SK-N-SH (cell line): ENCODE measurements at regions of chr19 and their contacts with region 1.

Region 1: GRCh38 chr19:5803752-5804515 is 933 bp upstream of the NRTN start:
- DNase-seq: peak; percentile 99
- H3K4me3 ChIP-seq: peak overlapping the region; percentile 30 to 56; a peak in 3 of 4 replicates
- H3K27ac ChIP-seq: no peak overlapping the region
- H3K4me1 ChIP-seq: peaks cover 3 to 32% of the 10 kb centered on the region in 2 experiments; a peak in 1 of 4 replicates
- H3K27me3 ChIP-seq: peaks cover 6% of the 10 kb centered on the region; the same call in 1 of the 2 replicates
- CTCF ChIP-seq: peak; percentile 96
- EP300 ChIP-seq: peak in 1 of 2 experiments; percentile 5; a peak in 1 of 4 replicates
- RAD21 ChIP-seq: peak; percentile 81

Region 2: GRCh38 chr19:5524081-5524480 is 279.9 kb before region 1 on chr19:
- CTCF ChIA-PET with region 1: no interaction called
- POLR2A ChIA-PET with region 1: no interaction called
- DNase-seq: no peak
- H3K4me3 ChIP-seq: no peak overlapping the region
- H3K27ac ChIP-seq: no peak overlapping the region
- H3K4me1 ChIP-seq: no peaks in the 10 kb centered on the region
- H3K27me3 ChIP-seq: no peaks in the 10 kb centered on the region; the same call in 1 of the 2 replicates
- CTCF ChIP-seq: no peak
- EP300 ChIP-seq: no peak
- RAD21 ChIP-seq: no peak

Region 3: DNA sequence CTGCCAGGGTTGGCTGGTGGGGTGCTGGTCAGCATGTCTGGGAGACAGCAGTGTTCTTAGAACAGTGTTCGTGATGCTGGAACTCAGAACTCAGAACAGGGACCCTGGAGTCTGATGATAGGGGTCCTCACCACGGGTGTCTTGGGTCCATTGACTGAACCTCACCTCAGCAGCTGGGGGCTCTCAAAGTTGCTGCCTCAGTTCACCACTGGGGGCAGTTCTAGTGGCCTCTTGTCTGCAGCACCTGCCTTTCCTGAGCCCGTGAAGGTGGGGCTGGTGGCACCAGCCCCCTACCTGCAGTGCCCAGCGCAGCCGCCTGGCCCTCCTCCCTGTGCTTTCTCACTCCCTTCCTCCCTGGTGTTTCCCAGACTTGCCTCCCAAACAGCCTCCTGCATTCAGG is 152.6 kb before region 1 on chr19:
- CTCF ChIA-PET with region 1: no interaction called
- POLR2A ChIA-PET with region 1: no interaction called
- DNase-seq: no peak
- H3K4me3 ChIP-seq: no peak overlapping the region
- H3K27ac ChIP-seq: no peak overlapping the region
- H3K4me1 ChIP-seq: no peaks in the 10 kb centered on the region
- H3K27me3 ChIP-seq: no peaks in the 10 kb centered on the region
- CTCF ChIP-seq: no peak
- EP300 ChIP-seq: no peak
- RAD21 ChIP-seq: no peak

Region 4: DNA sequence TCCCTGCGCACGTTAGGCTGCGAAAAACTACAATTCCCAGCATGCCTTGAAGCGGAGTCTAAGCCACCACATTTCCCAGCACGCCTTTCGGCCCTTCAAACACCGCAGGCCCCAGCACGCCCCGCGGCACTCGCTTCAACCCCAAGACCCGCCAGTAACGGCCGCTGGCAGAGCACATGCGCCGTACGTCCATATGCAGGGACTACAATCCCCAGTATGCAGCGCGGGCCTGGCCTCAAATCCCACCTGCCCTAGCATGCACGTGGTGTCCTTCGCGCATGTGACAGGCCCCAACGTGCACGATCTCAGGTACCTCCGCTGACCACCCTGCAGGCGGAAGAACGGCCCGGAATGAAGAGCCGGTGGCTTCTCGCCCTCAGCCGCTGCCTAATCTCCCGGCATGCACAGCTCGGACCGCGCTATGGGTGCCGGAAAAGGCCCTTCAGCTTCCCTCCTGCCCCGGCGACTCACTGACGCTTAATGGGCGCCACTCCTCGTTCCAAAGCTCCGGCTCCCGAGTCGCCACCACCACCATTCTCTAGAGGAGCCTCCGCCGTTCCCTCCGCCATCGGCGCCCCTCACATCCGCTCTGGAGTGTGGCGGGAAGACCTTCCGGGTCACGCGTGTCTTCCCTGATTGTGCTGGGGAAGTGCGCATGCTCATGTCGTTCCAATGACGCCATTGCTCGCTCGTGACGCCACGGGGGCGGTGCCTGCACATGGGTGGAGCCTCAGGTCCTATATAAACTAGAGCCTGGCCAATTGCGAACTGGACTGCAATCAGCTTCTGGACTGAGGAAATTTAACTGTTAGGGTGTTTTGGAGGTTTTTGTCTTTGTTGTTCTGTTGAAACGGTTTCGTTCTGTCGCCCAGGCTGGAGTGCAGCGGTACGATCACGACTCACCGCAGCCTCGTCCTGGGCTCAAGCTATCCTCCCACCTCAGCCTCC is 13.1 kb before region 1 on chr19 and contains the start of gene DUS3L:
- CTCF ChIA-PET with region 1: interaction called, 25 read pairs
- POLR2A ChIA-PET with region 1: interaction called, 3 read pairs
- DNase-seq: peak; percentile 97
- H3K4me3 ChIP-seq: peak within 1 kb of the TSS; percentile 73 to 97
- H3K27ac ChIP-seq: peak within 1 kb of the TSS; percentile 90 to 95
- H3K4me1 ChIP-seq: peaks cover 0 to 8% of the 10 kb centered on the region in 2 experiments; a peak in 1 of 4 replicates
- H3K27me3 ChIP-seq: no peaks in the 10 kb centered on the region
- CTCF ChIP-seq: no peak
- EP300 ChIP-seq: no peak
- RAD21 ChIP-seq: no peak
- polyA plus RNA-seq, gene DUS3L: 44.0 and 45.2 TPM in 2 replicates

Region 5: GRCh38 chr19:5857203-5858081 is 53.5 kb after region 1 on chr19:
- CTCF ChIA-PET with region 1: no interaction called
- POLR2A ChIA-PET with region 1: no interaction called
- DNase-seq: no peak
- H3K4me3 ChIP-seq: no peak overlapping the region
- H3K27ac ChIP-seq: no peak overlapping the region
- H3K4me1 ChIP-seq: no peaks in the 10 kb centered on the region
- H3K27me3 ChIP-seq: peaks cover 18% of the 10 kb centered on the region
- CTCF ChIP-seq: no peak
- EP300 ChIP-seq: no peak
- RAD21 ChIP-seq: no peak

Region 6: DNA sequence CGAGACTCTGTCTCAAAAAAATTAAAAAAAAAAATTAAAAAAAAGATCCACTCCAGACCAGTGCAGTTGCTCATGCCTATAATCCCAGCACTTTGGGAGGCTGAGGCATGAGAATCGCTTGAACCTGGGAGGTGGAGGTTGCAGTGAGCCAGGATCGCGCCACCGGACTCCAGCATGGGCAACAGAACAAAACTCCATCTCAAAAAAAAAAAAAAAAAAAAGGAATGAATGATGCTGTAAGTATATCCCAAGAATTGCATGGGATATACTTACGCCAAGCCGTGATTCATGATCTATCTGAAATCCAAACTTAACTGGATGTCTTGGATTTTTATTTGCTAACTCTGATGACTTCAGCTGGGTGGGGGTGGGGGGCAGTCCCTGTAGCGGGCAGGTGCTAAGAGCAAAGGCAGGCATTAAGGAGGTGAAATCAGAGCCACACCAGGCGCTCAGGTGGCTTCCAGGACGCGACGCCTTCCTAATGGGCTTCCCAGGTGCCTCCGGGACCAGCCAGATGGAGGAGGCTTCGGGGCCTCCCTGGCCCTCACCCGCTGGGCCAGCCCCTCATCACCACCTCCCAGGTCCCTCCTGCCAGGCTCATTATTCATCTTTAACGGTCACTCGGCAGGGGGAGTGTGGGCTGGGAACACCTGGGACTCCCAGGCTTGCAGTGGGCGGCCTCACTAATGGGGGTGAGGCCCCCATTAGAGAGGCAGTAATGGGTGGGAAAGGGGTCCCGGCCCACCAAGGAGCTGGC is 77.8 kb after region 1 on chr19:
- CTCF ChIA-PET with region 1: interaction called, 11 read pairs
- POLR2A ChIA-PET with region 1: no interaction called
- DNase-seq: no peak
- H3K4me3 ChIP-seq: no peak overlapping the region
- H3K27ac ChIP-seq: no peak overlapping the region
- H3K4me1 ChIP-seq: no peaks in the 10 kb centered on the region
- H3K27me3 ChIP-seq: no peaks in the 10 kb centered on the region; the same call in 1 of the 2 replicates
- CTCF ChIP-seq: no peak
- EP300 ChIP-seq: no peak
- RAD21 ChIP-seq: no peak

Region 7: DNA sequence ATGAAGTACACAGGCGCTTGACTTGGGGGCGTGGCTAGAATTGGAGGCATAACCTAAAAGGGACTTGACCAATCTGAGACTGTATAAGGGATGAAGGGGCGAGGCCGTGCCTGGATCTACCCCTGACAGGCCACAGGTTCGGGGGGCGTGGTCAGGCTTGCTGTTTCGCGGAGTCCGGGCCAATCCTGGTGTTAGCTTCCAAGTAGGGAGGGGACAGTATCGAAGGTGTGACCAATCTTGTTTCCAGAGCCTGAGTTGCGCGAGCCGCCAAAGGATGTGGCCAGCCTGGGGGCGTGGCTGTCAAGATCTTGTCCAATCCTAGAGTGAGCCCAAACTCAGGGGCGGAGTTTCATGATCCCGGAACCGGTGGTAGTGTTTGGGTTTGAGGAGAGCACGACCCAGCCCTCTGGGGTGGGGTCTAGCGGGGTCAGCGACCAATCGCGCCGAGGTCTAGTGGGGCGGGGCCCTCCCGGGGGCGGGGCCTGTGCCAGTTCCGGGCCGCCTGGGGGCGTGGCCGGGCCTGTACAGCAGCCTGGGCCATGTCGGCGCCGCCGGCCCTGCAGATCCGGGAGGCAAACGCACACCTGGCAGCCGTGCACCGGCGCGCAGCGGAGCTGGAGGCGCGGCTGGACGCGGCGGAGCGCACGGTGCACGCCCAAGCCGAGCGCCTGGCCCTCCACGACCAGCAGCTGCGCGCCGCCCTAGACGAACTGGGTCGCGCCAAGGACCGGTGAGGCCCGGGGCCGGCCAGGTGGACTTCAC is 100.6 kb after region 1 on chr19 and contains the start of gene VMAC:
- CTCF ChIA-PET with region 1: interaction called, 27 read pairs
- POLR2A ChIA-PET with region 1: interaction called, 8 read pairs
- DNase-seq: peak; percentile 99
- H3K4me3 ChIP-seq: peak within 1 kb of the TSS; percentile 71 to 79
- H3K27ac ChIP-seq: peak within 1 kb of the TSS; percentile 84 to 88
- H3K4me1 ChIP-seq: peaks cover 0 to 5% of the 10 kb centered on the region in 2 experiments; a peak in 2 of 4 replicates
- H3K27me3 ChIP-seq: no peaks in the 10 kb centered on the region
- CTCF ChIP-seq: no peak
- EP300 ChIP-seq: no peak
- RAD21 ChIP-seq: peak; percentile 10; the same call in 1 of the 2 replicates
- polyA plus RNA-seq, gene VMAC: 6.5 and 9.1 TPM in 2 replicates

Region 8: DNA sequence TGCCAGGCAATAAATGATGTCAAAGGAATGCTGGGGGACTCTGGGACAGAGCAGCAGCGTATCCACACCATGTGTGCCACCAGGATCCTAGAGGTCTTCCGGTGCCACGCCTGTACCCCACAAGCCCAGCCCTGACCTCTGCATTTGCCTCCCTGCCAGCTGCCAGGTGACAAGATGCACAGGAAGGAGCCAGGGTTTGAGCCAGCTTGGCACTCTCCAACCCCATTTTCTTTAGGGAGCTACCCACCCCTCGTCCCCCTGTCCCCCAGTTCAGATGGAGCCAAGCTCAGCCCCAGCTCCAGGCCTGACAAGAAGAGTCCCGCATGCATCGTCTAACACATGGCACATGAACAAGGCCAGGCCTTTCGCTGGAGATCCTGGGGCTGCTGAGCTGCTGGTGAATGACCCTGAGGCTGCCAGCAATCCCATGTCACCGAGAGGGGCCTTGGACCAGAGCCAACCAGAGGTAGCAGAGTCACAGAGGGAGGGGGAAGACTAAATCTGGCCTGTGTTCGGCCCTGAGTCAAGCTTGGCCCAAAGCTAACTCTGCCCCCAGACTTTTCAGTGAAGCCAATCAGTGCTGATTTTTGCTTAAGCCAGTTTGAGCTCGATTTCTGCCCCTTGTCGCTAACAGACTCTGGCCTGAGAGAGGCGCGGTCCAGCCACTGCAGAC is 155.9 kb after region 1 on chr19:
- CTCF ChIA-PET with region 1: interaction called, 26 read pairs
- POLR2A ChIA-PET with region 1: no interaction called
- DNase-seq: peak; percentile 90
- H3K4me3 ChIP-seq: no peak overlapping the region
- H3K27ac ChIP-seq: peak overlapping the region in 1 of 2 experiments; percentile 88; a peak in 2 of 4 replicates
- H3K4me1 ChIP-seq: peaks cover under 1 to 74% of the 10 kb centered on the region in 2 experiments; a peak in 3 of 4 replicates
- H3K27me3 ChIP-seq: no peaks in the 10 kb centered on the region
- CTCF ChIP-seq: no peak
- EP300 ChIP-seq: peak in 1 of 2 experiments; percentile 62; a peak in 1 of 4 replicates
- RAD21 ChIP-seq: no peak

Region 9: DNA sequence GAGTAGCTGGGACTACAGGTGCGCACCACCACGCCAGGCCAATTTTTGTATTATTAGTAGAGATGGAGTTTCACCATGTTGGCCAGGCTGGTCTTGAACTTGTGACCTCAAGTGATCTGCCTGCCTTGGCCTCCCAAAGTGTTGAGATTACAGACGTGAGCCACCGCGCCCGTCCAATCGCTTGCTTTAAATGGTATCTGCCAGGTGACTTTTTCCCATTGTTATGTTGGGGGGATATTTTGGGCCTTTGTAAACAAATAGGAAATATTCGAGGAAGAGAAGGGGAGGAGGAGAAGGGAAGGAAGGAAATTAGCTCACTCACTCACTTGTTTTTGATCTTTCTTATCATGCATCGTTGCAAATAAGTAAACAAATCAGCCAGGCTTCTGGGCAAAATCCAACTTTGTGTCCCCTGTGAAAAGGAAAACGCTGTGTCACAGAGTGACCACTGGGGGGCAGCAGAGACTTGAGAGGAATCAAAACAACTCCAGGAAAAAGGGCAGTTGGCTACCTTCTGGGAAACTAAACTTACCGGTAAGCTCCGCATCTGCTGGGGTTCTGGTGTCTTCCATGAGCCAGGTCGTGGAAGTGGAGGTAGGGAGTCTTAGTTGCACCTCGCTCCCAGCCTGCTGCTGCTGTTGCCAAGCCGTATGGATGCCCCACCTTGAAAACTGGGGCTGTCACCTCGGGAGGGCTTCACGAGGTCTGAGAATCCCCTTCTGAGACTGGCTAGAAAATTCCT is 183.3 kb after region 1 on chr19:
- CTCF ChIA-PET with region 1: interaction called, 22 read pairs
- POLR2A ChIA-PET with region 1: no interaction called
- DNase-seq: peak; percentile 79
- H3K4me3 ChIP-seq: peak overlapping the region in 1 of 2 experiments; percentile 9; a peak in 1 of 4 replicates
- H3K27ac ChIP-seq: no peak overlapping the region
- H3K4me1 ChIP-seq: peaks cover 3 to 9% of the 10 kb centered on the region in 2 experiments; a peak in 2 of 4 replicates
- H3K27me3 ChIP-seq: no peaks in the 10 kb centered on the region
- CTCF ChIP-seq: peak; percentile 92
- EP300 ChIP-seq: no peak
- RAD21 ChIP-seq: peak; percentile 94